Prostate gland (tissue), 2 donors: ENCODE measurements at regions of chr14 and their contacts with region 1.

Region 1: DNA sequence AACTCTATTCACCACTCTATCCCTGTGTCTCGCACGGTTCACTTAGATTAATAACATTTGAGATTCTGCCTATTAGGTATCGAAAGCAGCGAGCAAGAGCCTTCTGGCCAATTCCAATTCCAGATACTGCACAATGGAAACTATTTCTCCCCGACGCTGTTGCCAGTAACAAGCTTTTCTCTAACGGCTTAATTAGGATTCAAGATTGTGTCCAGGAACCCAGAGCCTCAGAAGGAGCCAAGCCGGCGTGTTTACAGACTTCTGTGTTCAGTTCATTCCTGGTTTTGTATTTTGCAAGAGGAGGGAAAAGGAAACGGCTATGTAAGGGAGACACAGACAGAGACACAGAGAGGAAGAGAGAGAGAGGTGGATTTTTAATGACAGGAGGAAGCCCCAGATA is 185.6 kb downstream of the DICER1 start:
- DNase-seq: peak; percentile 54
- H3K4me3 ChIP-seq: peak overlapping the region in 1 of 2 donors; percentile 6
- H3K27ac ChIP-seq: peak overlapping the region; percentile 49 to 60
- H3K4me1 ChIP-seq: no peaks in the 10 kb centered on the region
- H3K27me3 ChIP-seq: no peaks in the 10 kb centered on the region
- CTCF ChIP-seq: no peak
- POLR2A ChIP-seq: no peak

Region 2: DNA sequence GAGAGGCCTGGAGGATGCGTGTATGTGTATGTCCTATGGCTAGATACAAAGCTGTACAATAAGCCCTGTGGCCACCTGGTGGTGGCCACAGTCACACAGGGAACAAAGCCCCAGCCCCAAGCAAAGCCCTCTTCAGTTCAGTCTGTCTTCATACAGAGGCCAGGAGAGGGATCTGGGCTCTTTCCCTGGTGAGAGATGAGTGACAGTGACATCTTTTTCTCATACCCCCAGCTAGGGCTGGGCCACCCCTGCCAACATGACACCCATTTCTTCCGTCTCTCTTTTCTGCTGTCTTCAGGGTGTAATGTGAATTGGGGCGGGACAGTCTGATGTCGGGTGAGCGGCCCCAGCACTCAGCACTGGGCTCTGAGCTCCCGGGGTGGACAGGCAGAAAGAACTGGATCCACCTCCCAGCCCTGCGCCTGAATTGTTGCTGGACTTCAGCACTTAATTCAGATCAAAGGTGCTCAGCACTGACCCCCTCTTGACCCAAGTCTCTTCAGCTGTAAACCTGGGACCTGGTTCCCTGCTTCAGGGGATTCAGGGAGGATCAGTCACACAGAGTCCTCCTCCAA is 299.8 kb before region 1 on chr14:
- intact Hi-C with region 1: no loop called
- DNase-seq: no peak
- H3K4me3 ChIP-seq: no peak overlapping the region
- H3K27ac ChIP-seq: no peak overlapping the region
- H3K4me1 ChIP-seq: no peaks in the 10 kb centered on the region
- H3K27me3 ChIP-seq: no peaks in the 10 kb centered on the region
- CTCF ChIP-seq: no peak
- POLR2A ChIP-seq: no peak

Region 3: DNA sequence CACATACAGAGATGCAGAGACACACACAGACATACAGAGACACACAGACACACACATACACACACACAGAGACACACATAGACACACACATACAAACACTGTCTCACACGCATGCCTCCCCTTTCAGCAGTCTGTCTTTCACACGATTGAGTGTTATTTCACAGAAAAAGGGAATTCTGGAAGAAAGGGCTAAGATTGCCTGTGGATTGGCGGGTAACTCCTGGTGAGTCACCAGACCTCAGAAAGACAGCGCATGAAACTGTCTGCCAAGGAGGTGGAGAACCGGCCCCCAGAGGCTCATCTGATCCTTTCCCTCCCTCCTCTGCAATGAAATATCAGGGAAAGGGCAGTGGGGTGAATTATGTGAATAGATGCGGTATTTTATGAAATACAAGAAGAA is 74.7 kb before region 1 on chr14:
- intact Hi-C with region 1: no loop called
- DNase-seq: no peak
- H3K4me3 ChIP-seq: no peak overlapping the region
- H3K27ac ChIP-seq: no peak overlapping the region
- H3K4me1 ChIP-seq: no peaks in the 10 kb centered on the region
- H3K27me3 ChIP-seq: no peaks in the 10 kb centered on the region
- CTCF ChIP-seq: no peak
- POLR2A ChIP-seq: no peak

Region 4: DNA sequence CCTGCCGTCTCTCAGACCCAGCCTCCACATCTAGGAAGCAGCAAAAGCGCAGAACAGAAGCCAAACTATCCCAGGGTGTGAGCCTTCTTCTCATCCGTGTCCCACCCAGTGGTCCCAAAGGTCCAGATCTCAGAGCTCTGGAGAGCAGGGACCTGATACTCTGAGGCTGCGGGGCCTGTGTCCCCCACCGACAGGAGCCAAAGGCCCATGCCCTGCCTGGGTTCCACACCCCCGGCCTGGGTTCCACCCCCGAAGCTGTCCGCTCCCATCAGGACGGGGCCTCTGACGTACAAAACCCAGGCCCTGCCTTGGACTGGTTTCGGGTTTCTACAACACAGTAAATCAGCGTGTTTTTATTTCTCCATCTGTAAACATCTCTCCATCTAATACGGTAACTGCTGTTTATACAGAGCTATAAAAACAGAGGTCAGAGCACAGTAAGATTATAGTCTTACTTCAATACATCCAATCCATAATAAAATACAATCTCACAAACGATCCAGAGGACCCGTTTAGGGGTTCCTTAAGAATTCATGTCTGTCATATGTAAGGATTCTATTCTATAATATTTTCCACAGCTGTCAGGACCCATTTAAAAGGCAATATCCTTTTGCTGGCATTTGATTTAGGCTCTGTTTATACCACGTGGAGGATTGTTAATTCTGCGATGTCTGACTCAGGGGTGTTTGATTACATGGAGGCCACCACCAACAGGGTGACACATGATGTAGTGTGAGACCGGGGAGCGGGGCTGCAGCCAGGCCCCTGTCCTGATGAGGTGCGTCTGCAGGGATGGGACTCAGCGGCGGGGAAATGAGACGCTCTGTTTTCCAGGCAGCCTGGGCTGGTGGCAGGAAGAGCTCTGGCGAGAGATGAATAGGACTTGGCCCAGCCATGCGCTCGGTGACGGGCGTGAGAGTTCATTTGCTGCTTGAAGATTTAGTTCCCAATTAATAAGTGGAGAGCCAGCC is 75.2 kb after region 1 on chr14:
- intact Hi-C with region 1: loop called (anchors 5 kb)
- DNase-seq: peak; percentile 39
- H3K4me3 ChIP-seq: no peak overlapping the region
- H3K27ac ChIP-seq: peak overlapping the region; percentile 32 to 43
- H3K4me1 ChIP-seq: peaks cover 2% of the 10 kb centered on the region
- H3K27me3 ChIP-seq: no peaks in the 10 kb centered on the region
- CTCF ChIP-seq: no peak
- POLR2A ChIP-seq: no peak